GM12878 (cell line): ENCODE measurements at regions of chr6 and their contacts with region 1.

Region 1: GRCh38 chr6:24385536-24386269 is 17.0 kb upstream of the MRS2 start:
- DNase-seq: no peak
- ATAC-seq: peak; percentile 68
- H3K4me3 ChIP-seq: no peak overlapping the region
- H3K27ac ChIP-seq: no peak overlapping the region
- H3K4me1 ChIP-seq: no peaks in the 10 kb centered on the region
- H3K27me3 ChIP-seq: no peaks in the 10 kb centered on the region
- CTCF ChIP-seq: no peak
- EP300 ChIP-seq: no peak
- POLR2A ChIP-seq: no peak
- RAD21 ChIP-seq: no peak

Region 2: GRCh38 chr6:24396824-24397223 is 11.1 kb after region 1 on chr6:
- CTCF ChIA-PET with region 1: no interaction called
- POLR2A ChIA-PET with region 1: no interaction called
- RAD21 ChIA-PET with region 1: no interaction called
- SMC1A ChIA-PET with region 1: no interaction called
- in situ Hi-C with region 1: no loop called
- intact Hi-C with region 1: no loop called
- DNase-seq: no peak
- ATAC-seq: no peak
- H3K4me3 ChIP-seq: no peak overlapping the region
- H3K27ac ChIP-seq: no peak overlapping the region
- H3K4me1 ChIP-seq: no peaks in the 10 kb centered on the region
- H3K27me3 ChIP-seq: no peaks in the 10 kb centered on the region
- CTCF ChIP-seq: no peak
- EP300 ChIP-seq: no peak
- POLR2A ChIP-seq: no peak
- RAD21 ChIP-seq: peak; percentile 30; the same call in 1 of the 2 replicates

Region 3: DNA sequence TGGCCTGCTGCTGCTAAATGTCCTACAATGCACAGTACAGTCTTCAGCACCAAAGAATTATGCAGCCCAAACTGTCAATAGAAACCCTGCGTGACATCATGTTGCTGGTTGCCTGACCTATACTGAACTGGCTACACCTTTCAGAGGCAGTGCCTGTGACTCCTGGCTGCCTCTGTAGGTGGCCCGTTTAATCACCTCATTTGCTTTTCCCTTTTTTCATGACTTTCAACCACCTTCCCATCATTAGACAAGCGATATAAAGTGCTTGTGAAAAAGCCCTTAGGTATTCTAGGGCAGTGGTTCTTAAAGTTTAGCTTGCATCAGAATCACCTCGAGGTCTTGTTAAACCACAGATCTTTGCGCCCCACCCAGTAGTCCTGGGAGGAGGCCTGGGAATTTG is 583.1 kb after region 1 on chr6:
- CTCF ChIA-PET with region 1: no interaction called
- POLR2A ChIA-PET with region 1: interaction called, 10 read pairs
- RAD21 ChIA-PET with region 1: no interaction called
- SMC1A ChIA-PET with region 1: no interaction called
- in situ Hi-C with region 1: no loop called
- intact Hi-C with region 1: no loop called
- DNase-seq: no peak
- ATAC-seq: no peak
- H3K4me3 ChIP-seq: no peak overlapping the region
- H3K27ac ChIP-seq: no peak overlapping the region
- H3K4me1 ChIP-seq: peaks cover under 1% of the 10 kb centered on the region; the same call in 1 of the 2 replicates
- H3K27me3 ChIP-seq: no peaks in the 10 kb centered on the region
- CTCF ChIP-seq: no peak
- EP300 ChIP-seq: no peak
- POLR2A ChIP-seq: no peak
- RAD21 ChIP-seq: no peak